Activated T-helper 1 cell treated with anti-CD3 and anti-CD28 coated beads, Interleukin-12 subunit alpha, Interleukin-12 subunit beta, Interleukin-2, Interleukin-4 antibody, amounts not matched to agents 30 ng/mL and 10 ng/mL and 1 ng/mL, durations not matched to agents 14 hours and 24 hours and 36 hours (primary cell): ENCODE measurements at regions of chr6 and their contacts with region 1.

Region 1: DNA sequence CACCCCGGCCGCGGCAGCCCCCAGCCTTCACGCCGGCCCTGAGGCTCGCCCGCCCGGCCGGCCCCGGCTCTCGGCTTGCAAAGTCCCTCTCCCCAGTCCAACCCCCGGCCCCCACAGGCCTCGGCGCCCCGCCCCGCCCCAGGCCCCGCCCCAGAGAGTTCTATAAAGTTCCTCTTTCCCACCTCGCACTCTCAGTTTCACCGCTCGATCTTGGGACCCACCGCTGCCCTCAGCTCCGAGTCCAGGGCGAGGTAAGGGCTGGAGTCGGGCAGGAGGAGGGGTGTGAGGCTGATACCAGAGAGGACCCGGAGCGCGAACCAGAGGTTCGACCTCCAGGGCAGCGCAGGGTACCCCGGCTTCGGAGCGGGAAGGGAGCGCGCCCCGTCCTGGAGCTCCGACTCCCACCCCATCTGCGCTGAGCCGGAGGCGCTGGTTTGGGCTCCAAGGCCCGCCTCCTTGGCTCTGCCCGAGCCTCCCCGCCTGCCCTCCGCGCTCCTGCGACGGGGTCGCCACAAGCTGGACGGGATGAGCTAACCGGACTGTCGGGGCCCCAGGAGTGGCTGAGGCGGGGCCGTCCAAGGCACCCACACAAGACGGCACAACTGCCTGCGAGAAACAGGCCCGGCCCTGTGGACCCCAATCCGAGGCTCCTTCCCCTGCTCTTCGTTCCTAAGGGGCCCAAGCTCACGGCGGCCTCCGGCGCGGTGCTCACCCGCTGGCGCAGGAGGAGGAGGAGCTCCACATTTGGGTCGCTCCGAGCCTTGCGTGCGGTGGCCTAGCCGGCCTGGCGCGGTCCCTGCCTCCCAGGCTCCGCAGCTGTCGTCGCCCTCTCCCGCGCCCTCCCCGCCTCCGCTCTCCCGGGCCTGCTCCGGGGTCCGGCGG is at the start of gene IRF4:
- DNase-seq: peak; percentile 69
- H3K4me3 Mint-ChIP-seq: peak within 1 kb of the TSS; percentile 98
- H3K27ac Mint-ChIP-seq: peak within 1 kb of the TSS; percentile 98
- H3K4me1 Mint-ChIP-seq: peaks cover 41% of the 10 kb centered on the region
- H3K27me3 Mint-ChIP-seq: peaks cover 3% of the 10 kb centered on the region
- total RNA-seq, gene IRF4: 911 and 929 TPM in 2 replicates

Region 2: DNA sequence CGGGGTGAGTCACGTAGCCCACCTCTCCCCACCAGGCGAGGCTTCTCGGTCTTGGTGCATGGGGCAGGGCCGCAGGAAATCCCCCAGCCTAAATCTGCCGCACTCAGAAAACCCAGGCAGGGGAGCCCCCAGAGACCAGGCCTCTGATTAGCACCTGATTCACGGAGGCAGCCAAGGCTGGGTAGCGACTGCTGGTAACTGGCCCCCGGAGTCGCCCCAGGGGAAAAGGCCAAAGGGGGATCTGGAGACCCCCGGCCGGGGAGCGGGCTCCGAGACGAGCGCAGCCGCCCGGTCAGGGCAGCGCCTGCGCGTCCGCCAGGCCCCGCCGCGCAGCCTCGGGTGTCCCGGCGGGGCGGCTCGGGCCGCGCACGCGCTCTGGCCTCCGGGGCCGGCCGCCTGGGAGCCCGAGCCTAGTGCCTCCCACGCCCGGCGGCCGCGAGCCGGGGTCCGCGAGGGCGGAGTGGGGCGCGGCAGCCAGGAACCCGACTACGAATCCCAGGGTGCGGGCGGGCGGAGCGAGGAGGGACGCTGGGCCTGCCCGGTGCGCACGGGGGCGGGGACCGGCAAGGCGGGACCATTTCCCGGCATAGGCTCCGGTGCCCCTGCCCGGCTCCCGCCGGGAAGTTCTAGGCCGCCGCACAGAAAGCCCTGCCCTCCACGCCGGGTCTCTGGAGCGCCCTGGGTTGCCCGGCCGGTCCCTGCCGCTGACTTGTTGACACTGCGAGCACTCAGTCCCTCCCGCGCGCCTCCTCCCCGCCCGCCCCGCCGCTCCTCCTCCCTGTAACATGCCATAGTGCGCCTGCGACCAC is 99.9 kb before region 1 on chr6 and contains the start of gene DUSP22:
- intact Hi-C with region 1: loop called (anchors 1 kb)
- DNase-seq: peak; percentile 79
- H3K4me3 Mint-ChIP-seq: peak within 1 kb of the TSS; percentile 94
- H3K27ac Mint-ChIP-seq: peak within 1 kb of the TSS; percentile 99
- H3K4me1 Mint-ChIP-seq: peaks cover 39% of the 10 kb centered on the region
- H3K27me3 Mint-ChIP-seq: no peaks in the 10 kb centered on the region
- total RNA-seq, gene DUSP22: 22.0 and 22.1 TPM in 2 replicates

Region 3: GRCh38 chr6:431986-432385 is 40.2 kb after region 1 on chr6:
- intact Hi-C with region 1: loop called (anchors 1 kb)
- DNase-seq: peak; percentile 70
- H3K4me3 Mint-ChIP-seq: peak overlapping the region; percentile 61
- H3K27ac Mint-ChIP-seq: peak overlapping the region; percentile 60
- H3K4me1 Mint-ChIP-seq: peaks cover 85% of the 10 kb centered on the region
- H3K27me3 Mint-ChIP-seq: no peaks in the 10 kb centered on the region

Region 4: GRCh38 chr6:548517-548916 is 156.7 kb after region 1 on chr6:
- intact Hi-C with region 1: loop called (anchors 1 kb)
- DNase-seq: peak; percentile 43
- H3K4me3 Mint-ChIP-seq: peak overlapping the region; percentile 72
- H3K27ac Mint-ChIP-seq: peak overlapping the region; percentile 95
- H3K4me1 Mint-ChIP-seq: peaks cover 75% of the 10 kb centered on the region
- H3K27me3 Mint-ChIP-seq: no peaks in the 10 kb centered on the region

Region 5: GRCh38 chr6:710601-711571 is 319.1 kb after region 1 on chr6:
- intact Hi-C with region 1: loop called (anchors 2 kb)
- DNase-seq: peak; percentile 64
- H3K4me3 Mint-ChIP-seq: peak overlapping the region; percentile 95
- H3K27ac Mint-ChIP-seq: peak overlapping the region; percentile 99
- H3K4me1 Mint-ChIP-seq: peaks cover 44% of the 10 kb centered on the region
- H3K27me3 Mint-ChIP-seq: no peaks in the 10 kb centered on the region

Region 6: DNA sequence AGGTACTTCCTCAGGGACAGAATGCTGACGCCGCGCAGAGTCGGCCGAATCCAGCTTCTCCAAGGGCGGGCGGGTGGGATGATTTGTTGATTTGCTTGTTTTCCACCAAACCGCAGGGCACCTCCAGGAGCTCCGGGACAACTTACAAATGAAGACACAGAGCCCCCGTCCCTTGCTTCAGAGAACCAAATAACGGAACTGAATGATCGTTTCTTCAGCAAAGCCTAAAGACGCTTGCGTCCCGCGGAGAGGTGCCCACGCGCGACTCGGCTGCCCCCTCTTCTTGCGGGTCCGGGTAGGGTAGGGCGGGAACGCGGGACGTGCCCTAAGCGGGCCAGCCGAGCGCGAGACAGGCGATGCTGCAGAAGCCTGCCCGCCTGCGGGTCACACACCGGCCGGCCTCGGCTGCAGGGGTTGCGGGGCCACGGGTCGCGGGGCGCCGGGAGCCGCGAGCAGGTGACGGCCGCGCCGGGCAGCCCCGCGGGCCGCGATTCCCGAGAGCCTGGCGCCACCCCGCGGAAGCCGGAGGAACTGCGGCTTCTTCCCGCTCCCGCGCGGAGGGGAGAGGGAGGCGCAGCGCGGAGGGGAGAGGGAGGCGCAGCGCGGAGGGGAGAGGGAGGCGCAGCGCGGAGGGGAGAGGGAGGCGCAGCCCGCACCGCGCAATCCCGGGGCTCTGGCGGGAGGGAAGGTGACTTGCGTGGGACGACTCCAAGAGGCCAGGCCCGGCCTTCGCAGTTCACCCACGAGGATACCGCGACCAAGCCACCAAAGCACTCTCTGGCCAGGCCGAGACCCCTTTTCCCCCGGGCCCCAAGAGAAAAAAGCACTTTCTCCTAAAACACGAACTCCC is 989.9 kb after region 1 on chr6:
- intact Hi-C with region 1: loop called (anchors 5 kb)
- DNase-seq: peak; percentile 41
- H3K4me3 Mint-ChIP-seq: no peak overlapping the region
- H3K27ac Mint-ChIP-seq: no peak overlapping the region
- H3K4me1 Mint-ChIP-seq: peaks cover 20% of the 10 kb centered on the region
- H3K27me3 Mint-ChIP-seq: peaks cover 67% of the 10 kb centered on the region